A549 (cell line): ENCODE measurements at regions of chr12 and their contacts with region 1.

Region 1: GRCh38 chr12:6278439-6279255 is 31.8 kb upstream of the PLEKHG6 start:
- DNase-seq: peak; percentile 71 to 88
- ATAC-seq: peak; percentile 81 to 87
- H3K4me3 ChIP-seq: peak overlapping the region; percentile 50
- H3K27ac ChIP-seq: peak overlapping the region; percentile 97
- H3K4me1 ChIP-seq: peaks cover 40% of the 10 kb centered on the region
- CTCF ChIP-seq: peak; percentile 94
- EP300 ChIP-seq: no peak; a peak in 1 of 5 replicates
- POLR2A ChIP-seq: peak; percentile 45
- RAD21 ChIP-seq: peak; percentile 63 to 95

Region 2: GRCh38 chr12:6047249-6048237 is 231.1 kb before region 1 on chr12:
- CTCF ChIA-PET with region 1: interaction called, 15 read pairs
- POLR2A ChIA-PET with region 1: no interaction called
- DNase-seq: no peak
- ATAC-seq: peak; percentile 22 to 31; a peak in 3 of 6 replicates
- H3K4me3 ChIP-seq: no peak overlapping the region
- H3K27ac ChIP-seq: no peak overlapping the region
- H3K4me1 ChIP-seq: peaks cover 7% of the 10 kb centered on the region; the same call in 2 of the 3 replicates
- CTCF ChIP-seq: no peak
- EP300 ChIP-seq: no peak
- POLR2A ChIP-seq: no peak
- RAD21 ChIP-seq: no peak

Region 3: GRCh38 chr12:6062757-6063735 is 215.6 kb before region 1 on chr12:
- CTCF ChIA-PET with region 1: interaction called, 144 read pairs
- POLR2A ChIA-PET with region 1: interaction called, 7 read pairs
- DNase-seq: peak; percentile 59 to 77
- ATAC-seq: peak; percentile 71 to 90
- H3K4me3 ChIP-seq: no peak overlapping the region
- H3K27ac ChIP-seq: no peak overlapping the region
- H3K4me1 ChIP-seq: no peaks in the 10 kb centered on the region
- CTCF ChIP-seq: peak; percentile 84
- EP300 ChIP-seq: no peak
- POLR2A ChIP-seq: no peak
- RAD21 ChIP-seq: peak; percentile 91 to 96

Region 4: DNA sequence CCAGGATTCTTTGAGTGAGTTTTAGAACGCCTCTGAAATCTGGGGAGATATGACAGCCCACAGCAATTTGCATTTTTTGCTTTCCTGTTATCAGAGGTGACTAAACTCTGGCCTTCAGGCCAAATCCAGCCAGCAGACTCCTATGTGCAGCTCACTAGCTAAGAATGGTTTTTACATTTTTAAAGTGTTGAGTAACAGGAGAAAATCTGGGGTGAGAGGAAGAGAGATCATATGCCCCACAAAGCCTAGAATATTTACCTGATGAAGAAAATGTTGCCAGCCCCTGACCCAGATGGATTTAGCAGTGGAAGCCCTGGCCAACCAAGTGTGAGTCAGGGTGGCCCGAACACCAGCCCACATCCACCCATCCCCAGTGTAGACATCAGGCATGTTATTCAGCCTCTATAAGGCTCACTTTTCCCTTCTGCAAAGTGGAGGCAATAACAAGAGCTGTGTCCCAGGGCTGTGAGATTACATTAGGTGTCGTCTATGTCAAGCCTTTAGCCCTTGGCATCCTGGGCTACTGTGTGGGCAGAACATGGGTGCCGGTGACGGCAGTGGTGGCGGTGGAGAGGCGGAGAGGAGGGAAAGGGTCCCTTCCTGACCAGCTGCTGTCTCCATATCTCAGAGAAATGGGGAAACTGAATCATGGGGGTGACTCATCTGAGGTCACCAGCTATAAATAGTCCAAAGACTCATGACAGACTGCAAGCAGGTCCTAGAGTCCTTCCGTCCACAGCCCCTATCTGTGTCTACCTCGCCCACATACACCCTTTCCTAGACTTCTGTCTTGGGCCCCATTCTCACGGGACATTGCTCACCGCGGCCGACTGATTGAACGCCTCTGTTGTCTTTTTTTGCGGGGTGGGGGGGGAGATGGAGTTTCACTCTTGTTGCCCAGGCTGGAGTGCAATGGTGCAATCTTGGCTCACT is 111.1 kb before region 1 on chr12:
- CTCF ChIA-PET with region 1: interaction called, 10 read pairs
- POLR2A ChIA-PET with region 1: interaction called, 3 read pairs
- DNase-seq: peak; percentile 44 to 61
- ATAC-seq: peak; percentile 89 to 92
- H3K4me3 ChIP-seq: no peak overlapping the region
- H3K27ac ChIP-seq: peak overlapping the region; percentile 36 to 79; a peak in 5 of 6 replicates
- H3K4me1 ChIP-seq: peaks cover 16% of the 10 kb centered on the region
- CTCF ChIP-seq: no peak
- EP300 ChIP-seq: no peak
- POLR2A ChIP-seq: no peak
- RAD21 ChIP-seq: no peak

Region 5: GRCh38 chr12:6230321-6231110 is 48.1 kb before region 1 on chr12:
- CTCF ChIA-PET with region 1: interaction called, 38 read pairs
- POLR2A ChIA-PET with region 1: no interaction called
- DNase-seq: no peak
- ATAC-seq: no peak
- H3K4me3 ChIP-seq: no peak overlapping the region
- H3K27ac ChIP-seq: no peak overlapping the region
- H3K4me1 ChIP-seq: peaks cover 9% of the 10 kb centered on the region; the same call in 2 of the 3 replicates
- CTCF ChIP-seq: no peak
- EP300 ChIP-seq: no peak
- POLR2A ChIP-seq: no peak
- RAD21 ChIP-seq: no peak

Region 6: DNA sequence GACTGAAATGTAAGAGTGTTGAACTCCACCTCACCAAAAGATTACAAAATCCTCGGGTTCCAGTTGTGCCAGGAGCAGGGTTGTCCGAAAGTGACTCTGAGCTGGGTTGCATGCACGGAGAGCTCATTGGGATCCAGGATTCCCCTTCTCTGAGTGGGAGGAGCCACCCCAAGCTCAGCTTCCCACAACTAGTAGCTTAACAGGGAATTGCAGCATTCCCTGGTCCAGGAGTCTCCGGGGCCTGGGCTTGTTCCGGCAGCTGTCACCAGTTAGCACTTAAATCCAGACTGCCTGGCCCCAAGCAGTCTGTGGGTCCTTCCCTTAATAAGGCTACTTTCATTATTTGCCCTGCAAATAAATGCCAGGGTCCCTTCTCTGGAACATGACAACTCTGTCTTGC is 28.3 kb before region 1 on chr12:
- CTCF ChIA-PET with region 1: interaction called, 12 read pairs
- POLR2A ChIA-PET with region 1: no interaction called
- DNase-seq: no peak
- ATAC-seq: peak; percentile 26 to 43; a peak in 3 of 6 replicates
- H3K4me3 ChIP-seq: no peak overlapping the region
- H3K27ac ChIP-seq: no peak overlapping the region
- H3K4me1 ChIP-seq: no peaks in the 10 kb centered on the region
- CTCF ChIP-seq: no peak
- EP300 ChIP-seq: no peak
- POLR2A ChIP-seq: no peak
- RAD21 ChIP-seq: no peak